CD8-positive, alpha-beta memory T cell (primary cell): ENCODE measurements at regions of chr6 and their contacts with region 1.

Region 1: GRCh38 chr6:24855395-24856245 is 56.9 kb upstream of the ARMH2 start:
- DNase-seq: peak; percentile 43 to 78 (median 68)
- H3K4me3 ChIP-seq: no peak overlapping the region
- H3K4me3 Mint-ChIP-seq: peak overlapping the region in 6 of 7 donors; percentile 35 to 69 (median 60)
- H3K27ac ChIP-seq: no peak overlapping the region
- H3K27ac Mint-ChIP-seq: peak overlapping the region; percentile 47 to 95 (median 87)
- H3K4me1 ChIP-seq: peaks cover 55% of the 10 kb centered on the region
- H3K4me1 Mint-ChIP-seq: peaks cover 53 to 57% (median 56%) of the 10 kb centered on the region in 3 donors
- H3K27me3 ChIP-seq: no peaks in the 10 kb centered on the region
- H3K27me3 Mint-ChIP-seq: peaks cover 0 to 2% of the 10 kb centered on the region in 2 donors

Region 2: DNA sequence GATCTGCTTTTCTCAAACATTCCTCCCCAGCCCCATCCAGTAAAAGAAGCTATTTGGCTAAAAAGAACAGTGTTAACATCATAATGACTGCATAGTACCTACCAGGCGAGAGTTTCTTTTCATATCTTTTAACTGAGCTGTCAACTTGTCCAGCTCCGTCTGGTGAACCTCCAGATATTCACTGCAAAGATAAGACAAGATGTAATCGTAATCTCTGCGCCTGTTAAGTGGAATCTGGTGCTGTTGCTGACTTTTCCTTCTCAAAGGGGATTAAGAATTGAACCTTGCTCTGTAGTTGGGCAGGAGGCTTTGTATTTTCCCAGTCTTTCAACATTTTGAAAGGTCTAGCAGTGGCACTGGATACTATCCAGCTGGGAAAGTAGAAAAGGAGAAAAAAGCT is 17.2 kb after region 1 on chr6:
- CTCF ChIA-PET with region 1: interaction called, 13 read pairs
- POLR2A ChIA-PET with region 1: interaction called, 4 read pairs
- DNase-seq: no peak
- H3K4me3 ChIP-seq: no peak overlapping the region
- H3K4me3 Mint-ChIP-seq: no peak overlapping the region
- H3K27ac ChIP-seq: no peak overlapping the region
- H3K27ac Mint-ChIP-seq: peak overlapping the region in 7 of 8 donors; percentile 9 to 85 (median 73)
- H3K4me1 ChIP-seq: peaks cover 58% of the 10 kb centered on the region
- H3K4me1 Mint-ChIP-seq: peaks cover 62 to 73% (median 72%) of the 10 kb centered on the region in 3 donors
- H3K27me3 ChIP-seq: no peaks in the 10 kb centered on the region
- H3K27me3 Mint-ChIP-seq: no peaks in the 10 kb centered on the region

Region 3: DNA sequence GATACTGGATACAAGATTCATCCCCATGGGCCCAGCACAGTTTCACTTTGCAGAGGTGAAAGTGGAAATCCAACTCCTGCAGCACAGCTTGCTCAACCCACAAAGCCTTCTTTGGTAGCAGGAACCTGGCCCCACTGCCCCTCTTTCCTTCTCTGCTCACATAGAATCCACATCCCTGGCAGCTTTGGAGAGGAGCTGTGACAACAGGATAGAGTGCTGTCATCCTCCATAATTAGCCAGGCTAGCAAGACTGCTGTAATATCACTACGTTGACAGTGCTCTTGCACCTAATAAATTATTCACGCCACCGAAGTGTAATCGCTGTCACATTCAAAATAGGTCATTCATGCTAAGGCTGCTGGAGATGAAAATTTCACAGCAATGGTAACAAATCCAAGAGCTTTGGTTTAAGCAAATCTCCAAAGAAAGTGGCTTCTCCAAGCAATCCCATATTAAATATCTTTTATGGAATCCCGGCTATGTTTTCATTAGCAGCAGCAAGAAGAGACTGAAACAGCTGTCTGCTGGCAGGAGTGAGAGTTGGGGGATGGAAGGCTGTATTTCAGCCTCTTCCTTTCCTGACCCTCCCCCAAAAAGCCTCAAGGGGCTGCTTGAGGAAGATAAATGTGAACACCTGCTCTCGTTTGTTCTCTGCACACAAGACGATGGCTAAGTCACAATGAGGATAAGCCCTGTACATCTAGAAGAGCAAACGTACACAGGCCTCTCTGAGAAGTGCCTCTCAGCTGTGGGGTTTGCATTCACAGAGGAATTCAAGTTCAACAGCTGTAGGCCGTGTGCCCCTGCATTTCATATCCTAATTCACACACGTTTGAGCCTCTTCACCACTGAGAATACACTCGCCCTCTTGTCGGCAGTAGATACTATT is 63.6 kb after region 1 on chr6:
- CTCF ChIA-PET with region 1: interaction called, 19 read pairs
- POLR2A ChIA-PET with region 1: interaction called, 3 read pairs
- DNase-seq: no peak
- H3K4me3 ChIP-seq: peak overlapping the region; percentile 40
- H3K4me3 Mint-ChIP-seq: peak overlapping the region; percentile 63 to 92 (median 71)
- H3K27ac ChIP-seq: no peak overlapping the region
- H3K27ac Mint-ChIP-seq: peak overlapping the region; percentile 67 to 98 (median 87)
- H3K4me1 ChIP-seq: peaks cover 97% of the 10 kb centered on the region
- H3K4me1 Mint-ChIP-seq: peaks cover 89 to 97% (median 97%) of the 10 kb centered on the region in 3 donors
- H3K27me3 ChIP-seq: no peaks in the 10 kb centered on the region
- H3K27me3 Mint-ChIP-seq: no peaks in the 10 kb centered on the region

Region 4: GRCh38 chr6:25027221-25027916 is 171.7 kb after region 1 on chr6:
- CTCF ChIA-PET with region 1: interaction called, 131 read pairs
- POLR2A ChIA-PET with region 1: no interaction called
- DNase-seq: peak; percentile 63 to 85 (median 67)
- H3K4me3 ChIP-seq: peak overlapping the region; percentile 44
- H3K4me3 Mint-ChIP-seq: peak overlapping the region; percentile 63 to 90 (median 81)
- H3K27ac ChIP-seq: peak overlapping the region; percentile 11
- H3K27ac Mint-ChIP-seq: peak overlapping the region; percentile 78 to 96 (median 88)
- H3K4me1 ChIP-seq: peaks cover 35% of the 10 kb centered on the region
- H3K4me1 Mint-ChIP-seq: peaks cover 58 to 74% (median 61%) of the 10 kb centered on the region in 3 donors
- H3K27me3 ChIP-seq: no peaks in the 10 kb centered on the region
- H3K27me3 Mint-ChIP-seq: no peaks in the 10 kb centered on the region